CD14-positive monocyte (primary cell): ENCODE measurements at regions of chr1 and their contacts with region 1.

Region 1: DNA sequence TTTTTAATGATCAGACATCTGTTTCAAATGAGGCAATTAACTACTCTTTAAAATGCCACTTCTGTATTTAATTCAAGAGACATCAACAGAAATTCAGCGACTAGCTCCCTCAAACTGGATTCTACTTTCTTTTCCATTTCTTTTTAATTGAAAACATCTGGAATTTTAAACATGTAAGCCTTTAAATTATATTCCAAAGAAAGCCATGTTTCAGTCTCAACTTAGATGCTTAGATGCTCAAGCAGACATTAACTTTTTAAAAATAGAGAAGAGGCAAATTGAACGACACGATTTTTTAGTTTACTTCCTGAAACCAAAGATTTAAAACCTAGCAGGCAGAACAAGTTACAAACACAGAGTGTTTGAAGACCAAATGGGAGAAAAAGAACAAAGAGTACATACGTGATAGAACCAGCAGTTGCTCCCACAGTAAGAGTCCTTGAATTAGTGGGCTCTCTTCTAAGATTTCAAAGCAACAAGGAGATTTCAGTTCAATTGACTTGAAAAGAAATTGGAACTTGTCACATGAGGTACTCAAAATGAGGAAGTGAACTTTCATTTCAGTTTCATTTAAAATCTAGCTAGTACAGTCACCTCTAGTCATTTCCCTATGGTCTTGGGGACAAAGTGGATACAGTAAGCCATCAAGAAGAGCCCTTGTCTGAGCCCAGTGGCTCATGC is at the start of gene CTSS:
- DNase-seq: peak; percentile 82 to 93 (median 92)
- H3K4me3 ChIP-seq: peak within 1 kb of the TSS; percentile 96 to 100 (median 99)
- H3K4me3 Mint-ChIP-seq: peak within 1 kb of the TSS; percentile 97 to 100
- H3K27ac ChIP-seq: peak within 1 kb of the TSS; percentile 70 to 96
- H3K27ac Mint-ChIP-seq: peak within 1 kb of the TSS; percentile 95 to 99 (median 98)
- H3K4me1 ChIP-seq: peaks cover 22 to 48% of the 10 kb centered on the region in 2 donors
- H3K4me1 Mint-ChIP-seq: peaks cover 37% of the 10 kb centered on the region
- H3K27me3 ChIP-seq: no peaks in the 10 kb centered on the region
- H3K27me3 Mint-ChIP-seq: peaks cover 0 to 5% (median 0%) of the 10 kb centered on the region in 3 donors
- CTCF ChIP-seq: no peak
- polyA plus RNA-seq, gene CTSS: 2,349 to 6,327 (median 5,201) TPM

Region 2: GRCh38 chr1:150798525-150798924 is 33.1 kb after region 1 on chr1:
- intact Hi-C with region 1: loop called in 1 of 2 experiments (anchors 5 kb)
- DNase-seq: no peak
- H3K4me3 ChIP-seq: no peak overlapping the region
- H3K4me3 Mint-ChIP-seq: no peak overlapping the region
- H3K27ac ChIP-seq: no peak overlapping the region
- H3K27ac Mint-ChIP-seq: peak overlapping the region in 1 of 7 donors; percentile 23
- H3K4me1 ChIP-seq: peaks cover 42 to 44% of the 10 kb centered on the region in 2 donors
- H3K4me1 Mint-ChIP-seq: peaks cover 41% of the 10 kb centered on the region
- H3K27me3 ChIP-seq: no peaks in the 10 kb centered on the region
- H3K27me3 Mint-ChIP-seq: no peaks in the 10 kb centered on the region
- CTCF ChIP-seq: no peak

Region 3: GRCh38 chr1:150925816-150926741 is 160.6 kb after region 1 on chr1 and contains the start of gene SETDB1:
- intact Hi-C with region 1: loop called in 1 of 2 experiments (anchors 10 kb)
- DNase-seq: peak; percentile 96 to 99 (median 98)
- H3K4me3 ChIP-seq: peak within 1 kb of the TSS; percentile 71 to 88 (median 75)
- H3K4me3 Mint-ChIP-seq: peak within 1 kb of the TSS; percentile 94 to 95
- H3K27ac ChIP-seq: peak within 1 kb of the TSS; percentile 83 to 92
- H3K27ac Mint-ChIP-seq: peak within 1 kb of the TSS; percentile 97 to 99 (median 99)
- H3K4me1 ChIP-seq: peaks cover 19 to 27% of the 10 kb centered on the region in 2 donors
- H3K4me1 Mint-ChIP-seq: peaks cover 27% of the 10 kb centered on the region
- H3K27me3 ChIP-seq: no peaks in the 10 kb centered on the region
- H3K27me3 Mint-ChIP-seq: peaks cover 0 to 3% (median 1%) of the 10 kb centered on the region in 3 donors
- CTCF ChIP-seq: no peak
- polyA plus RNA-seq, gene SETDB1: 13.9 to 69.4 (median 15.5) TPM

Region 4: DNA sequence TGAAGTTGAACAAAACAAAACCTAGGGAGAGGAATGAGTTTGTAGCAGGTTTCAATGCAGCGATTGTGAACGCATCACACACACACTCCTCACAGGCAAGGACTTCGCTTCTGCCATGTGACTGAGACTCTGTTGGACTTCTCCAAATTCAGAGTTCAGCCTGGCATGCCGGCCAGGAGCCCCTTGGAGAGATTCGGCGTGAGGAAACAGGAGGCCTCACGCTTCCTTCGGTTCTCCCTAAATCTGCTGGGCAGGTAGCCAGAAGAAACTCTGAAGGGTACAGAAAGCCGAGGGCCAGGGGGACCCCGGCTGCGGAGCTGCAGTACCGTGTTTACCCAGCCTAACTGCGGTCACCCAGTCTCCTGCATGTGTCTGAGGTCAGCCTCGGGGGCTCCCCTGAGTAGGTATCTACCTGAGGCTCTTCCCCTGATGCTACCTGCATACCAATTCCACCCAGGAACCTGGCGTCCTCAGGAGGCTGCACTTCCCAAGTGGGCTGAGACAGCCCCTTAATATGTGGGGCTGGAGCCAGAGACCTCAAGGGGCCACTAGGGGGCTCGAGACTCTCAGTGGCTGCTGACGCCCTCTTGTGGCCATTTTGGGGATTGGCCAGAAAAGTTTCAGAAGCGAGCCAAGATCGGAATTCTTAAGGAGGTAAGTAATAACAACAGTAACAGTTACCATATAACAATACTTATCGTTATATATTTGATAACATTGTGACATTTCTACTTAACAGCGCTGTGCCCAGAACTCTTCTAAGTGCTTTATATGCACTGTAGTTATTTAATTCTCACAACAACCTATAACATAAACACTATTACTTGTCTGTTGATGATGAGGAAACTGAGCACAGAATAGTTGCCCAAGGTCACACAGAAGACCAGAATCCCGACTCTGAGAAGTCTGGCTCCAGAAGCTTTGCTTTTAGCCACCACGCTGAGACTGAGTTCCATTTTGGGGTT is 213.9 kb after region 1 on chr1:
- intact Hi-C with region 1: loop called in 1 of 2 experiments (anchors 10 kb)
- DNase-seq: peak; percentile 81 to 92 (median 83)
- H3K4me3 ChIP-seq: peak overlapping the region; percentile 49 to 79 (median 67)
- H3K4me3 Mint-ChIP-seq: peak overlapping the region; percentile 74 to 93
- H3K27ac ChIP-seq: peak overlapping the region; percentile 81 to 87
- H3K27ac Mint-ChIP-seq: peak overlapping the region; percentile 91 to 100 (median 99)
- H3K4me1 ChIP-seq: peaks cover 48 to 50% of the 10 kb centered on the region in 2 donors
- H3K4me1 Mint-ChIP-seq: peaks cover 46% of the 10 kb centered on the region
- H3K27me3 ChIP-seq: no peaks in the 10 kb centered on the region
- H3K27me3 Mint-ChIP-seq: no peaks in the 10 kb centered on the region
- CTCF ChIP-seq: peak; percentile 100

Region 5: GRCh38 chr1:150995896-150996295 is 230.5 kb after region 1 on chr1:
- intact Hi-C with region 1: loop called in 1 of 2 experiments (anchors 5 kb)
- DNase-seq: peak in 1 of 3 donors; percentile 27
- H3K4me3 ChIP-seq: no peak overlapping the region
- H3K4me3 Mint-ChIP-seq: no peak overlapping the region
- H3K27ac ChIP-seq: peak overlapping the region in 1 of 2 donors; percentile 20
- H3K27ac Mint-ChIP-seq: peak overlapping the region in 5 of 7 donors; percentile 44 to 70 (median 55)
- H3K4me1 ChIP-seq: peaks cover 22% of the 10 kb centered on the region in 2 donors
- H3K4me1 Mint-ChIP-seq: peaks cover 27% of the 10 kb centered on the region
- H3K27me3 ChIP-seq: no peaks in the 10 kb centered on the region
- H3K27me3 Mint-ChIP-seq: peaks cover 0 to 2% (median 2%) of the 10 kb centered on the region in 3 donors
- CTCF ChIP-seq: peak; percentile 97

Region 6: GRCh38 chr1:151156515-151156819 is 391.0 kb after region 1 on chr1 and contains the start of gene TNFAIP8L2:
- intact Hi-C with region 1: loop called in 1 of 2 experiments (anchors 5 kb)
- DNase-seq: peak; percentile 64 to 72 (median 64)
- H3K4me3 ChIP-seq: peak within 1 kb of the TSS; percentile 74 to 91 (median 91)
- H3K4me3 Mint-ChIP-seq: peak within 1 kb of the TSS; percentile 98
- H3K27ac ChIP-seq: peak within 1 kb of the TSS; percentile 60 to 79
- H3K27ac Mint-ChIP-seq: peak within 1 kb of the TSS; percentile 90 to 96 (median 95)
- H3K4me1 ChIP-seq: peaks cover 51 to 60% of the 10 kb centered on the region in 2 donors
- H3K4me1 Mint-ChIP-seq: peaks cover 49% of the 10 kb centered on the region
- H3K27me3 ChIP-seq: no peaks in the 10 kb centered on the region
- H3K27me3 Mint-ChIP-seq: peaks cover 0 to 7% (median 0%) of the 10 kb centered on the region in 3 donors
- CTCF ChIP-seq: no peak
- polyA plus RNA-seq, gene TNFAIP8L2: 50.3 to 104 (median 103) TPM